Activated B cell treated with CpG ODN at 0.5 μM for 24 hours (primary cell): ENCODE measurements at regions of chr22 and their contacts with region 1.

Region 1: DNA sequence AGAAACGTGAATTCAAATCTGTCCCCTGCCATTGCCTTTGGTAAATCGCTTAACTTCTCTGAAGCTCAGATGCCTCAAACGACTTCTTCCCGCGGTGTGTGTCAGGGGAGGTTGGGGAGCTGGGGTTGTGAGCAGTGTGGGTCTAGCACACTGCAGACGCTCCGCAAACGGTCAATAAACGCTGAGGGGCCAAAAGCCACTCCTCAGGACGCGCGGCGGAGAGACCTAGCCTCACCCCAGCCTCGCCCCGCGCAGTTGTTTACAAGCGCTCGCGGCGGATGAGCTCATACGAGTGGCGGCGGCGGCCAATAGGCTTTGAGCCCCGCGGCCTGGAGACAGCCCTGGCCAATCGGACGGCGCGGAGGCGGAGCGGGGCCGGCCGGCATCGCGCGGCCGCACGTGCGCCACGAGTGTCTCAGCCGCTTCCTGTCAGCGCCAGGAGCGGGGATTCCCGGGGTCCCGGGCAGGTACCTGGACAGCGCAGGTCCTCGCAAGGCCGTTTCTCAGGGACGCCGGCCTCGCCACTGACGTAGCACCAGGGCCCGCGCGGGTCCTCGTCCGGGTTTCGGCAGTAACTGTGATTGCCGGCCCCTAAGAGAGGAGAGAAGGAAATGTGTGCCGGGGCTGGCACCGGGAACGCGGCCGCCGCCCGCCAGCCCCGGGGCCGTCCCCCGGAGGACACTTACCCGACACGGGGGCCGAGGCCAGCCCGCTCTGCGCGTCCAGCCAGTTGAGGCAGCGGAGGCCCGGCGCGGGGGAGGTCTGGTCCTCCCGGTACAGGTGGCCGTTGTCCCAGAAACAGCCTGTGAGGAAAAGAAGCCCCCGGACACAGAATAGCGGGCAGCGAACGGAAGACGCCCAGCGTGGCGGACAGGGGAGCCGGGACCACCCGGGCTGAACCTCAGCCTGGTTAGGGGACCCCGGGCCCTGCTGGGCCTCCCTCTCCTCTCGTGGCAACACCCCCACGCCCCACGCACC is 1.5 kb downstream of the PIK3IP1 start:
- DNase-seq: peak; percentile 89
- ATAC-seq: peak; percentile 86
- H3K4me3 Mint-ChIP-seq: peak overlapping the region; percentile 92
- H3K27ac Mint-ChIP-seq: peak overlapping the region; percentile 100
- H3K4me1 Mint-ChIP-seq: peaks cover 80% of the 10 kb centered on the region
- H3K27me3 Mint-ChIP-seq: no peaks in the 10 kb centered on the region
- CTCF ChIP-seq: no peak

Region 2: GRCh38 chr22:30634471-30635233 is 656.1 kb before region 1 on chr22:
- CTCF ChIA-PET with region 1: no interaction called
- POLR2A ChIA-PET with region 1: interaction called, 3 read pairs
- intact Hi-C with region 1: loop called (anchors 2 kb)
- DNase-seq: peak; percentile 83
- ATAC-seq: peak; percentile 57
- H3K4me3 Mint-ChIP-seq: peak overlapping the region; percentile 83
- H3K27ac Mint-ChIP-seq: peak overlapping the region; percentile 88
- H3K4me1 Mint-ChIP-seq: peaks cover 20% of the 10 kb centered on the region
- H3K27me3 Mint-ChIP-seq: no peaks in the 10 kb centered on the region
- CTCF ChIP-seq: no peak

Region 3: DNA sequence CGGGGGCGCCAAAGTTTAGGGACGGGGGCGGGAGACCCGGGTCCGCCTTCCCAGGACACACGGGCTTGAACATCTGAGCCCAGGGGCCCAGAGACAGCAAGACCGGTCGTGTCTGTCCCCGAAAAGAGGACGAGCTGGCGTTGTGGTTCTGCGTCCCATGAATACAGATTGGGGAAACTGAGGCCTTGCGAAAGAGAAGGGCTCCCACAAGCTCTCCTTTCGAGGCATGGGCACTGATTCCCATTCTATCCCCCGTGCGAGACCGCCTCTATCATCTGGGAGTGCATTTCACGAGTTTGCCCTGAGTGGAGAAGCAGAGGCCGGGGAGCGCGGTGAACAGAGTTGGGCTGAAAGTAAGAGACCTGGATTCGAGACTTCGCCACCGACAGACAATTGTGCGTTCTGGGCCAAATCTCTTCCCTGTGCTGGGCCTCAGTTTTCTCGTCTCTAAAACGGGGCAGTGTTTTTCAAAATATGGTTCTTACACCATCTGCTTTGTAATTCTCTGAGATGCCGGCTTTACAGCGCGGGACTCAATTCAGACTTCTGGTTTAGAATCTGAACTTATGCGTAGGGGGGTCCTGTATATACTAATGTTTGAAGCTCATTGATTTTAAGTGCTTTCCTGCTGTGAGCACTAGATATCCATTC is 130.3 kb before region 1 on chr22:
- CTCF ChIA-PET with region 1: no interaction called
- POLR2A ChIA-PET with region 1: interaction called, 20 read pairs
- intact Hi-C with region 1: no loop called
- DNase-seq: no peak
- ATAC-seq: peak; percentile 40
- H3K4me3 Mint-ChIP-seq: peak overlapping the region; percentile 99
- H3K27ac Mint-ChIP-seq: peak overlapping the region; percentile 96
- H3K4me1 Mint-ChIP-seq: peaks cover 30% of the 10 kb centered on the region
- H3K27me3 Mint-ChIP-seq: no peaks in the 10 kb centered on the region
- CTCF ChIP-seq: no peak

Region 4: GRCh38 chr22:31302006-31302405 is 11.2 kb after region 1 on chr22:
- CTCF ChIA-PET with region 1: interaction called, 4 read pairs
- POLR2A ChIA-PET with region 1: interaction called, 17 read pairs
- intact Hi-C with region 1: no loop called
- DNase-seq: no peak
- ATAC-seq: no peak
- H3K4me3 Mint-ChIP-seq: no peak overlapping the region
- H3K27ac Mint-ChIP-seq: no peak overlapping the region
- H3K4me1 Mint-ChIP-seq: peaks cover 11% of the 10 kb centered on the region
- H3K27me3 Mint-ChIP-seq: no peaks in the 10 kb centered on the region
- CTCF ChIP-seq: no peak

Region 5: DNA sequence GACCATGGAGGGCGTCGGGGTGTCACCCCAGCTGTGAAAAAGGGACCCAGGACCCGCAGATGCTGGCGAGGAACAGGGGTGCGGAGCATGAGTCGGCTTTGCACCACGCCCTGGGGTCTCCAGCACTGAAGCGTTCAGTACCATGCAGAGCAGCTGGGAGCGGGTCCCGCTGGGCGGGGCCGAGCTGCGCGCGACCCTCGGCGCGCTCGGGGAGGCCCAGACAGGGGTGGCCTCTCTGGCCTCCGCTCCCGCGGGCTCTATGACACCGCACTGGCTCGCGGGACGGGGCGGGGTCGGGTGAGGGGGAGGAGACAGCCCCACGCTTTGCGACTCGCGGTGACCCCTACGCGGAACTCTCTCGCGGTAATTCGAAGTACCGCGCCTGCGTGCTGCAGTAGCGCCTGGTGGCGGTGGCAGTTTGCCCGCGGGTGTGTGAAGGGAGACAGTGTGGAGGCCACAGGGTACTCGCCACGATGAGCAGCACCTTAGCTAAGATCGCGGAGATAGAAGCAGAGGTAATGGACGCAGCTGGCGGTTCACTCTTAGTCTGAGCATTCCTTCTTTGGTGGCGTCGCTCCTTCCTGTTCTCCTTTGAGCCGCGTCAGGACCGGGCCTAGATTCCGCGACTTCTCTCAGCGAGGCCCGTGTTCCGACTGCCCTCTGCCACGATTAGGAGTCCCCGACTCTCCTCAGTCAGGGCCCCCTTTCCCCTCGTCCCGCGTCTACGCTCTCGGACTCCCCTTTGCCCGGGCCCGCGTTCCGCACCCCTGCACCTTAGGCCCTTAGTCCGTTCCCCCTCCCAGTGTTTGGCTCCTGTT is 108.6 kb after region 1 on chr22 and contains the start of gene DRG1:
- CTCF ChIA-PET with region 1: no interaction called
- POLR2A ChIA-PET with region 1: interaction called, 3 read pairs
- intact Hi-C with region 1: loop called (anchors 5 kb)
- DNase-seq: peak; percentile 97
- ATAC-seq: peak; percentile 98
- H3K4me3 Mint-ChIP-seq: peak within 1 kb of the TSS; percentile 93
- H3K27ac Mint-ChIP-seq: peak within 1 kb of the TSS; percentile 88
- H3K4me1 Mint-ChIP-seq: peaks cover 20% of the 10 kb centered on the region
- H3K27me3 Mint-ChIP-seq: no peaks in the 10 kb centered on the region
- CTCF ChIP-seq: no peak
- total RNA-seq, gene DRG1: 68.5 and 71.1 TPM in 2 replicates

Region 6: DNA sequence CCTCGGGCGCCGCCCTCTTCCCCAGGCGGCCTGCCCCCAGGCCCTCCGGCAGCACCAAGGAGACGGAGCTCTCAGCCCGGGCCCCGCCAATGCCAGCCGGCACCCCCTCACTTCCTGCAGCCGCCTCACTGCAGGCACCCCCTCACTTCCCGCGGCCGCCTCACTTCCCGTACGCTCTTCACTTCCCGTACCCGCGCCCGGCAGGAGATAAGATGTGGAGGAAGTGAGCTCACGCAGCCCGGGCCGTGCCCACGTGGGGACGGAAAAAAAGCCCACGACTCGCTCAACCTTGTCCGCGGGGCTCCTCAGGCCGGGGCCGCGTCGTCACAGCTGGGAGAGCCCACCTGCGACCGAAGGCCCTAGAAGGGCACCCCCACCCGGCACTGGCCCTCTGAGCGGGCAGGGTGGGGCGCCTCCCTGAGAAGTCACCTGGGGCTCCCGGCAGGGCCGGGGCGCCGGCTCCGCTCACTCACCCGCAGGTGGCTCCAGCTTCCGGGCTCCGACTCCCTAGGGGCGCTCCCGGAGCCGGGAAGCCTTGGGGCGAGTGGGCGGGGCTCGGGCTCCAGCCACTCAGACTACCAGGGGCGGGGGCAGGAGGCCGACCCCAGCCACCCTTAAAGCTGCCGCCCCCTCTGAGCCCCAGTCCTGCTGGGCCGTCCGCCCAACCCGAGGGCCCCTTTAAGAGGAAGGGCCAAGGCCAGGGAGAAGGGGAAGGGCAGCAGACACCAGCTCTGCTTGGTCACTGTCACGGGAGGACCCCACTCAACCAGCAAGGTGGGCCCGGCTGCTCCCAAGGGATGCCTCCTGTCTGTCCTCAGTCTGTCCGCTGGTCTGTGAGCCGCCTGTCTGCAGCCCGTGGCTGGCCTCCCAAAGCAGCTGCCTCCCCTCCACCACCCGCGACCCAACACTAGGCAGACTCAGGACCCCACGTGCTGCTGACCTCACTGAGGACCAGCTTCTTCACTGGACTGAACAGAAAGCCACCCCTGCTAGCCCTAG is 339.8 kb after region 1 on chr22:
- CTCF ChIA-PET with region 1: no interaction called
- POLR2A ChIA-PET with region 1: no interaction called
- intact Hi-C with region 1: loop called (anchors 5 kb)
- DNase-seq: peak; percentile 83
- ATAC-seq: peak; percentile 80
- H3K4me3 Mint-ChIP-seq: peak overlapping the region; percentile 88
- H3K27ac Mint-ChIP-seq: peak overlapping the region; percentile 95
- H3K4me1 Mint-ChIP-seq: peaks cover 66% of the 10 kb centered on the region
- H3K27me3 Mint-ChIP-seq: no peaks in the 10 kb centered on the region
- CTCF ChIP-seq: no peak